GM12878 (cell line): ENCODE measurements at regions of chr16 and their contacts with region 1.

Region 1: GRCh38 chr16:11312718-11313492 is 31.8 kb upstream of the PRM1 start:
- DNase-seq: no peak
- ATAC-seq: no peak
- H3K4me3 ChIP-seq: no peak overlapping the region
- H3K27ac ChIP-seq: no peak overlapping the region; the same call in 1 of the 2 replicates
- H3K4me1 ChIP-seq: peaks cover 57% of the 10 kb centered on the region
- H3K27me3 ChIP-seq: no peaks in the 10 kb centered on the region; a peak in 1 of 4 replicates
- CTCF ChIP-seq: no peak
- EP300 ChIP-seq: no peak
- POLR2A ChIP-seq: no peak
- RAD21 ChIP-seq: no peak

Region 2: DNA sequence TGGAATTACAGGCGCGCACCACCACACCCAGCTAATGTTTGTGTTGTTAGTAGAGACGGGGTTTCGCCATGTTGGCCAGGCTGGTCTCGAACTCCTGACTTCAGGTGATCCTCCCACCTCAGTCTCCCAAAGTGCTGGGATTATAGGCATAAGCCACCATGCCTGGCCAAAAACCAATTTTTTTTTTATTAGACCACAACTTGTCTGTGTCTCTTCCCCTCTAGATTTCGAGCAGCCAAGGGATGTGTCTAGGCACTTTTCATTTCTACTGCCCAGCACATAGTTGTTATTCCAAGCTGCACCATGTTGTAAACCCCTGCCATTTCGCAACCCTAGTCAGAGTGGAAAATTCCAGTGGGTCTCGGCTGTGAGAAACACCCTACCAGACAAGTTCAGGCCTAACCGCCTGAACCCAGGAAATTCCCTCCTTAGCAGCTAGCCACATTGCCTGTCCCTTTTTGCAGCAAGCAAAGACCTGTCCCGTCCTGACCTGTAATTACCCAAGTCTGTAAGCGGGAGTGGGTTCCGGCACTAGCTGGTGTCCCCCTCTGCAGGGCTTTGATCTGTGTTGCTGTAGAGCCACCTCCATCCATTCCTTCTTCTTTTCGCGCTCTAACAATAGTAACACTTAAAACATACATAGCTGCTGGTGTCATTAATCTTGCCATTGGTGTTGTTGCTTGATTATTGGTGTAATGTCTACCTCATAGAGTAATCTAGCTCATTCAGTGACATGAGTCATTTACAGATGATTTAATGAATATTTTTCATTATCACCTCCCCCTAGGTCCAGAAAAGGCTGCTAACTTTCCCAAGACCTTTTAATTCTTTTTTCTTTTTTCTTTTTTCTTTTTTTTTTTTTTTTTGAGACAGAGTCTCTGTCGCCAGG is 1004.4 kb before region 1 on chr16:
- CTCF ChIA-PET with region 1: no interaction called
- POLR2A ChIA-PET with region 1: no interaction called
- RAD21 ChIA-PET with region 1: no interaction called
- SMC1A ChIA-PET with region 1: no interaction called
- in situ Hi-C with region 1: loop called (anchors 10 kb)
- intact Hi-C with region 1: no loop called
- DNase-seq: peak; percentile 16
- ATAC-seq: peak; percentile 24
- H3K4me3 ChIP-seq: no peak overlapping the region
- H3K27ac ChIP-seq: peak overlapping the region; percentile 50
- H3K4me1 ChIP-seq: peaks cover 31% of the 10 kb centered on the region
- H3K27me3 ChIP-seq: no peaks in the 10 kb centered on the region
- CTCF ChIP-seq: peak in 1 of 3 experiments; percentile 5; a peak in 1 of 6 replicates
- EP300 ChIP-seq: no peak
- POLR2A ChIP-seq: no peak
- RAD21 ChIP-seq: no peak

Region 3: DNA sequence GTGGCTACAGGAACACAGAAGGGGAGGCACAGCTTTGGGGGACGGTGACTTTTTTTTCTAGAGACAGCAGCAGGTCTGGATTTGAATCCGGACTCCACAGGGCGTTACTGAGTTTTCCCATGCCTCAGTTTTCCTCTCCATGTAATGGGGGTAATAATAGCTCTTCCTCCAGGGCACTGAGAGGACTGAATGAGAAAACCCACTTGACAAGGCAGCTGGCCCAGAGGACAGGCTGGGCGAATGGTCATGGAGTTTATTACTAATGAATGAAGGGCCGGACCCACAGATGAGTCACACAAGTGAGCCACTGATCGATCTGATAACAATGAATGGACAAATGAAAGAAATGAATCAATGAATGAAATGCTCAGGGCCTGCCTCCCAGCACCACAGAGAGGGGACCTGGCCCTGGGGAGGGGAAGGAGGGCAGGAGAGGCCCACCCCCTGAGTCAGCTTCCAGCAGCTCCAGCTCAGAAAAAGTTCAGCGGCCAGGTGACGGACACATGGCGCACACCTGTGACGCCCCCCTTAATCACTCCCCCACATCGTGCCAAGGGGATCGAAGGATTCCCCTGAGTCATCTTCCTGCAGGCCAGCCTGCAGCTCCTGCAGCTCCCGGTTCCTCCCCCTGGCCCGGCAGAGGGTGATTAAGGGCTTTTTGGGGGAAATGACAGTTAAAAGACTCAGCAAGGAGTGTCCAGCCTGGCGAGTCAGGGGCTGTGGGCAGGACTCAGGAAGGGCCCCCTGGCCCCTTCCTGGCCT is 111.2 kb before region 1 on chr16:
- CTCF ChIA-PET with region 1: no interaction called
- POLR2A ChIA-PET with region 1: no interaction called
- RAD21 ChIA-PET with region 1: interaction called, 4 read pairs
- SMC1A ChIA-PET with region 1: no interaction called
- in situ Hi-C with region 1: no loop called
- intact Hi-C with region 1: loop called (anchors 5 kb)
- DNase-seq: no peak
- ATAC-seq: peak; percentile 5
- H3K4me3 ChIP-seq: no peak overlapping the region
- H3K27ac ChIP-seq: peak overlapping the region; percentile 45
- H3K4me1 ChIP-seq: peaks cover 67% of the 10 kb centered on the region
- H3K27me3 ChIP-seq: no peaks in the 10 kb centered on the region
- CTCF ChIP-seq: no peak
- EP300 ChIP-seq: peak in 1 of 2 experiments; percentile 28; a peak in 1 of 4 replicates
- POLR2A ChIP-seq: no peak
- RAD21 ChIP-seq: no peak

Region 4: GRCh38 chr16:11328172-11329070 is 15.5 kb after region 1 on chr16:
- CTCF ChIA-PET with region 1: interaction called, 40 read pairs
- POLR2A ChIA-PET with region 1: interaction called, 14 read pairs
- RAD21 ChIA-PET with region 1: interaction called, 89 read pairs
- SMC1A ChIA-PET with region 1: interaction called, 34 read pairs
- in situ Hi-C with region 1: no loop called
- intact Hi-C with region 1: loop called (anchors 1 kb)
- DNase-seq: peak; percentile 95
- ATAC-seq: peak; percentile 84
- H3K4me3 ChIP-seq: peak overlapping the region; percentile 56
- H3K27ac ChIP-seq: peak overlapping the region; percentile 89
- H3K4me1 ChIP-seq: peaks cover 48% of the 10 kb centered on the region
- H3K27me3 ChIP-seq: no peaks in the 10 kb centered on the region
- CTCF ChIP-seq: peak in 2 of 3 experiments; percentile 4 to 6; a peak in 1 of 6 replicates
- EP300 ChIP-seq: peak; percentile 59 to 93
- POLR2A ChIP-seq: peak; percentile 78
- RAD21 ChIP-seq: peak; percentile 23; the same call in 1 of the 2 replicates

Region 5: GRCh38 chr16:11345040-11345862 is 32.3 kb after region 1 on chr16 and contains the start of gene RMI2:
- CTCF ChIA-PET with region 1: interaction called, 70 read pairs
- POLR2A ChIA-PET with region 1: interaction called, 5 read pairs
- RAD21 ChIA-PET with region 1: interaction called, 129 read pairs
- SMC1A ChIA-PET with region 1: interaction called, 8 read pairs
- in situ Hi-C with region 1: no loop called
- intact Hi-C with region 1: loop called (anchors 1 kb)
- DNase-seq: peak; percentile 77
- ATAC-seq: peak; percentile 99
- H3K4me3 ChIP-seq: peak within 1 kb of the TSS; percentile 68
- H3K27ac ChIP-seq: peak within 1 kb of the TSS; percentile 57
- H3K4me1 ChIP-seq: peaks cover 6% of the 10 kb centered on the region
- H3K27me3 ChIP-seq: no peaks in the 10 kb centered on the region
- CTCF ChIP-seq: no peak
- EP300 ChIP-seq: no peak
- POLR2A ChIP-seq: peak; percentile 88
- RAD21 ChIP-seq: no peak
- polyA plus RNA-seq, gene RMI2: 9.6 to 21.7 TPM

Region 6: DNA sequence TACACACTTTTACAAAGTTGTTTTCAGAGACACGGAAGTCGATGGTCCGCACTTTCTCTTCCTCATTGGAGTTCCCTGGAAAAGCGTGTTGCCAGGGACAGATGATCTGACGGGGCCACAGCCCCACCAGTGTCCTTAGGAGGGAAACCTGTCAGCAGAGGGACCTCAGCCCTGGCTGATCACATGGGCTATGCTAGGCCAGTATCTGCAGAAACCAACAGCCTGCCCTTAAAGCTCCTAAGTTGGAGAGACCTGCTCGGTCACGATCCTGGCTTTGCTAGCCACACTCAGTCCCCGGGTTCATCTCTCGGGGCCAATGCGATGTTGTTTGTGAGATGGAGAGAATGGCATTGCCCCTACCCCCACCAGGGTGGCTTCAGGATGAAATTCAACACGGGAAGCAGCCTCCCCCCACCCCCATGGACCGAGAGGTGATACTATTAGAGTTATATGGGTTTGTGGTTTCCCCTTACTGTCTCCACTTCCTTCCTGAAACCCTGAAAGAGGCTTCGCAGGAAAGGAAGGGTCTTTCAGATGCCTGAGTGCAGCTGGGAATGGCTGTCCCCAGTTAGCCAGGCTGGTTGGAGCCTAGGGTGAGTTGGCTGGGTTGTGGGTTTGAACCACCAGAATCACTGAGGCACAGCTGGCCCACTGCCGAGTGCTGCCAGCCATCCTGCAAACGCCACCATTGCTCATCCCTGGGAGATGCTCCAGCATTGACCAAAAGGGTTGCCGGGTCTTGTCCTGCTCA is 49.0 kb after region 1 on chr16:
- CTCF ChIA-PET with region 1: interaction called, 70 read pairs
- POLR2A ChIA-PET with region 1: interaction called, 5 read pairs
- RAD21 ChIA-PET with region 1: interaction called, 129 read pairs
- SMC1A ChIA-PET with region 1: interaction called, 13 read pairs
- in situ Hi-C with region 1: no loop called
- intact Hi-C with region 1: no loop called
- DNase-seq: peak; percentile 45
- ATAC-seq: peak; percentile 65
- H3K4me3 ChIP-seq: peak overlapping the region; percentile 38; the same call in 1 of the 2 replicates
- H3K27ac ChIP-seq: peak overlapping the region; percentile 5; the same call in 1 of the 2 replicates
- H3K4me1 ChIP-seq: peaks cover 28% of the 10 kb centered on the region
- H3K27me3 ChIP-seq: no peaks in the 10 kb centered on the region
- CTCF ChIP-seq: no peak
- EP300 ChIP-seq: peak in 1 of 2 experiments; percentile 70; a peak in 2 of 4 replicates
- POLR2A ChIP-seq: no peak
- RAD21 ChIP-seq: 0 out of 2 replicates have a peak, but pooled peaks have one; percentile 24

Region 7: DNA sequence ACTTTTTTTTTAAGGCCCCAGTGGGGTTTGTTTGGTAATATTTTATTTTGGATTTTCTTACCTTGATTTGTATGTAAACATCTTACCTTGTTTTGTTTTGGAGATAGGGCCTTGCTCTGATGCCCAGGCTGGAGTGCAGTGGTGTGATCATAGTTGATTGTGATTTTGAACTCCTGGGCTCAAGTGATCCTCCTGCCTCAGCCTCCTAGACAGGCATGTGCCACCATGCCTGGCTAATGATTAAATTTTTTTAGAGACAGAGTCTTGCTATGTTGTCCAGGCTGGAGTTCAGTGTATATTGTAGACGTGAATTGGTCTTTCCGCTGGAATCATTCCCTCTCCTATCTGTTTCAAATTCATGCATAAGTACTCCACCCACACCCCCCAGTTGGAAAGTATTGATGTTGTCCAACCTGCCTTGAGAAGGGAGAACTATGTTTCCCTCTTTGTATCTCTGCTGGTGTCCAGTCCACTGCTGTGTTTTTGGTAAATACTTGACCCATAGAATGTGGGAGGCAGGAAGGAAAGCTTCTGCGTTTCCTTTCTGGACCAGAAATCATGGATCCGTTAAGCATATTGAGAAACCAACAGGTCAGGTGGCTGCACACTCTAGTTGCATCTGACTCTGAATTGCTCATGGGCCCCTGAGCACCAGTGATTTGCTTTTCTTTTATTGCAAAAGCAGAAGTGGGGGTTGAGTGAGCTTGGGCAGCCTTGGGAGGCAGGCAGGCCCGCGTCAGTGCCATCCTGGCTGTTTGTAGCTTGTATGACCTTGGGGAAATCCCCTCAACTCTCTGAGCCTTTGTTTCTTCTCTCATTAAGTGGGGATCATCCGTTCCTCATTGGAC is 57.4 kb after region 1 on chr16:
- CTCF ChIA-PET with region 1: interaction called, 5 read pairs
- POLR2A ChIA-PET with region 1: interaction called, 3 read pairs
- RAD21 ChIA-PET with region 1: interaction called, 15 read pairs
- SMC1A ChIA-PET with region 1: no interaction called
- in situ Hi-C with region 1: no loop called
- intact Hi-C with region 1: no loop called
- DNase-seq: peak; percentile 57
- ATAC-seq: peak; percentile 93
- H3K4me3 ChIP-seq: no peak overlapping the region
- H3K27ac ChIP-seq: no peak overlapping the region
- H3K4me1 ChIP-seq: peaks cover 15% of the 10 kb centered on the region
- H3K27me3 ChIP-seq: no peaks in the 10 kb centered on the region
- CTCF ChIP-seq: no peak
- EP300 ChIP-seq: no peak
- POLR2A ChIP-seq: no peak
- RAD21 ChIP-seq: no peak